ENCODE measurements at regions of chr12 and their contacts with region 1.

Region 1: DNA sequence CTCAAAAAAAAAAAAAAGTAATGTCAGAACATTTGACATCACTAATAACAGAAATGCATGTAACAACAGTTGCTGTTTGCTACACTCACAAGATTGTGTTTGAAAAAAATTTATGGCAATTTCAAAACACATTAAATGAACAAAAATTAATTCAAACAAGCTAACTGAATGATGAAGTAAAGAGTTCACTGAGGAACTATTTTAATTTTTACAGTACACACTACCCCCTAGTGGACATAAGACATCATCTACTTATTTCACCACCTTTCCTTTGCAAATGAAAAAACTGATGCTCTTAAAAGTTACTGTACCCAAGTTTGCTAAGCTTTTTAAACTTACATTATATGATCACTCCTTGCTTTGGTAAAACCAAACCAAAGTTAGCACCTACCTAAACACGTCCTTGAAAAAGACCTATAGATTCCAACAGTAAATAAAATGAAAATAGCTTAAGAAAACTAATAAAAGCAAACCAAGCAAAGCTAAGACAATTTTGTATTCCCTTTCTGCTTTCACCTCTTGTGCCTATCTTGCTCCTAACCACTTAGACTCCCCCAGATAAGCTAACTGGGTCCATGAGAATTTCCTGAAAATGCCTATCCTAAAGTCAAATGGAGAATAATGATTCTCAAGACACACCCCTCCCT is 22.2 kb downstream of the UBE2N start:
- DNase-seq: no peak
- H3K4me3 ChIP-seq: no peak overlapping the region
- H3K27ac ChIP-seq: peak overlapping the region; percentile 31
- H3K4me1 ChIP-seq: peaks cover 76% of the 10 kb centered on the region
- H3K27me3 ChIP-seq: no peaks in the 10 kb centered on the region
- CTCF ChIP-seq: peak; percentile 75

Region 2: DNA sequence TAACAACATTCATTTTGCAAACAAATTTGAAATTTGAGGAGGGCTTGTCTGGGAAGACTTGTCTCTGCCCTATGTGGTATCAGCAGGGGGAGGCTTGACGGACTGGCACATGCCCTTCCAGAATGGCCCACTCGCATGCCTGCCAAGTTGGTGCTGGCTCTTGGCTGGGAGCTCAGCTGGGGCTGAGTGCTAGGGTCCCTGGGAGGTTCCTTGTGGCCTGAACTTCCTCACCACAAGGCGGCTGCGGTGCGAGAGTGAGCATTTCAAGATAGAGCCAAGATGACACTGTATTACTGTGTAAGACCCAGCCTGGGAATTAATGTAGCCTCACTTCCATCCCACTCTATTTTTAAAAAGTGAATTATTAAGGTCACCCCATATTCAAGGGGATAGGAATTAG is 988.4 kb before region 1 on chr12:
- intact Hi-C with region 1: no loop called
- DNase-seq: no peak
- H3K4me3 ChIP-seq: no peak overlapping the region
- H3K27ac ChIP-seq: no peak overlapping the region
- H3K4me1 ChIP-seq: no peaks in the 10 kb centered on the region
- H3K27me3 ChIP-seq: no peaks in the 10 kb centered on the region
- CTCF ChIP-seq: no peak

Region 3: DNA sequence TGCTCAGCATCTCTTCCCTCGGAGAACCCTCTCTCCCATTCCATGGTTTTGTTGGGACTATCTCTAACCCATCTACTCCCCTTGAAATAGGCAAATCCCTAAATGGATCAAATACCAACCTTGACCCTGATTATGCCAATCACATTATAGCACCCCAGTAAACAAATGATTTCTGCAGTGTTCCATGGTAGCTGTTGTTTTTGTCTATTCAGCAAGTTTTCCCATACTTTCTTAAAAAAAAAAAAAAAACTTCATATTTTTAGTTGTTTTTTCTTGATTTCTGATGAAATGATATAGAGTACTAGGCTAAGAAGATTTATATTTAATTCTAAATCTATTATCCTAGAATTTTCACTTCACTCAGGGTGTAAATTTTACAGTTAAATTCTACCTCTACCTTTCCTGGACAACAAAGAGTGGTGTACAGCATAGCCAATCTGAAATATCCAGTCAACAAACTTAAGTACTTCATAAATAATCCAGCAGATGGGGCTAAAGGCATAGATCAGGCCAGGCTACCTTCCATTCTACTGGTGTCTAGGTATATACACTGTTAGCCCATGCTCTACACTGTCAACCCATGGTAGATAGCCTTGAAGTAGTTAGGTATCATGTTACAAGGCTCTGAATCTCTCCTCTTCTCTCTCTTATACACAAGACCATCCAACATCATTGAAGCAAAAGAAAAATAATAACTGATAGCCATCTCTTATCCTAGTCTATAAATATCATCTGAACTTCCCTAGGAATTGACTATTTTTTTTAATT is 634.5 kb before region 1 on chr12:
- intact Hi-C with region 1: loop called (anchors 10 kb)
- DNase-seq: no peak
- H3K4me3 ChIP-seq: no peak overlapping the region
- H3K27ac ChIP-seq: no peak overlapping the region
- H3K4me1 ChIP-seq: peaks cover 25% of the 10 kb centered on the region
- H3K27me3 ChIP-seq: no peaks in the 10 kb centered on the region
- CTCF ChIP-seq: peak; percentile 72

Region 4: DNA sequence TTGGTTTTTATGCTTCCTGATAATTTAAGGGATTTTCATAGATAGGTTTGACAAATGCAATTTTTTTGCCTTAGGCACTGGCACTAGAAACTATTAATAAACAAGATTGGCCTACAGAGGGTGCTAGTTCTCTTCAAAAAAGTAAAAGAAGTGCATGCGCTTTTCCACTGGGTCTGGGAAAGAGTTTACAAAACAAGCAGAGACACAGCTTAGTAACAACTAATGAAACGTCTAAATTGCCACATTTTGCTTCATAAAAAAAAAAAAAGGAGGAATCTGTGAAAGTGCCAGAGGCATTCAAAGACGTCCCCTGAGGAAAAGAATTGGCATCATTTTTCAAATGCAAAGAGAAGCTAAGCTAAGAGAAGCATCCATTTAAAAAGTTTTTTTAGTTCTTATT is 432.1 kb before region 1 on chr12:
- intact Hi-C with region 1: loop called (anchors 5 kb)
- DNase-seq: no peak
- H3K4me3 ChIP-seq: peak overlapping the region; percentile 2
- H3K27ac ChIP-seq: peak overlapping the region; percentile 85
- H3K4me1 ChIP-seq: peaks cover 24% of the 10 kb centered on the region
- H3K27me3 ChIP-seq: no peaks in the 10 kb centered on the region
- CTCF ChIP-seq: peak; percentile 71